MCF 10A (cell line): ENCODE measurements at regions of chr6 and their contacts with region 1.

Region 1: DNA sequence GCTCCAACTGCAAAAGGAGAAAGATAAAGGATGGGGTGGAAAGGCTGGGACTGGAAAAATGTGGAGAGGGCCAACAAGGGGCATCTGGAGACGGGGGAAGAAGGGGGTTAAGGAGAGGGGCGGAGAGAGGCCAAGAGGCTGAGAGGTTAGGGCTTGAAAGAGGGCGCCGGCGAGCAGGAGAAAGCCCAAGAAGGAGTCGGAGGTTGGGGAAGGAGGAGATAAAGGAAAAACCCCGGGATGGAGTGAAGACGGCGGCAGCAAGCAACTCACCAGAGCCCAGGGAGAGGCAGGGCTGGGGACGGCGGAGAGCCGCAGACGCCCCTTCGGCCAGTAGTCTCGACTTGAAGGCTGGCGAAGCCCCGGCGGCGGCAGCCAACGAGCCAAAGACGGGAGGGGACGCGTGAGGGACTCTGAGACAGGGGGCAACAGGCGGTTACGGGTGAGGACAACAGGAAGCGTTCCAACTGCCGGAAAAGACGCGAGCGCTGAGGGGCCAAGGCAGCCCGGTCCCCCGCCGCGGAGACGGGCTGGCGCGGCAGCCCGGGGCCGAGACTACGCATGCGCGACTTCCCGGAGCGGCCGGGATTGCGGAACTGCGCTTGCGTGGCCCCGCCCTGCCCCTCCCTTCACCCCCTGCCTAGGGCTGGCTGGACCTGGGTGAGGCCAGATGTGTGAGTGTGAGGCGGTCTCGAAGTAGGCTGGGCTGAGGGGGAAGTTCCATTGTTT is at the start of gene STK38:
- DNase-seq: peak; percentile 91
- H3K4me3 Mint-ChIP-seq: peak within 1 kb of the TSS; percentile 91
- H3K27ac Mint-ChIP-seq: peak within 1 kb of the TSS; percentile 93
- H3K4me1 Mint-ChIP-seq: peaks cover 12% of the 10 kb centered on the region
- H3K27me3 Mint-ChIP-seq: no peaks in the 10 kb centered on the region
- CTCF ChIP-seq: peak; percentile 20
- total RNA-seq, gene STK38: 16.8 and 20.0 TPM in 2 replicates

Region 2: DNA sequence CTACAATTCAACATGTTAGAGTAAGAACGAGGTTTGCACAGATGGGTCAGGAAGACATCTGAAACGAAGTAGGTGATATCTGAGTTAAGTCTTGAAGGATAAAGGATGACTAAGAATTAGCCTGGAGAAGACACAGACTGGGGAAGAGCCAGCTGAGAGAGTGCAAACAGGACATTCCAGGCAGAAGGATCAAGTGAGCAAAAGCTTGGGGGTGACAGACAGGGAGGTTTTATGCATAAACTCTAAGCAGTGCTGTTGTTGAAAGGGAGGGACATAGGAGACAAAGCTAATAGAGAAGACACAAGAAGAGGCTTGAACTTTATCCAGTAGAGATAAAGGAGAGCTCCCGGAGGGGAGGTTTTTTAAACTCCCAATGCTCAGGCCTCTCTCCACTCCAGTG is 144.6 kb before region 1 on chr6:
- CTCF ChIA-PET with region 1: no interaction called
- POLR2A ChIA-PET with region 1: no interaction called
- intact Hi-C with region 1: no loop called
- DNase-seq: no peak
- H3K4me3 Mint-ChIP-seq: no peak overlapping the region
- H3K27ac Mint-ChIP-seq: no peak overlapping the region
- H3K4me1 Mint-ChIP-seq: no peaks in the 10 kb centered on the region
- H3K27me3 Mint-ChIP-seq: peaks cover 11% of the 10 kb centered on the region
- CTCF ChIP-seq: no peak

Region 3: DNA sequence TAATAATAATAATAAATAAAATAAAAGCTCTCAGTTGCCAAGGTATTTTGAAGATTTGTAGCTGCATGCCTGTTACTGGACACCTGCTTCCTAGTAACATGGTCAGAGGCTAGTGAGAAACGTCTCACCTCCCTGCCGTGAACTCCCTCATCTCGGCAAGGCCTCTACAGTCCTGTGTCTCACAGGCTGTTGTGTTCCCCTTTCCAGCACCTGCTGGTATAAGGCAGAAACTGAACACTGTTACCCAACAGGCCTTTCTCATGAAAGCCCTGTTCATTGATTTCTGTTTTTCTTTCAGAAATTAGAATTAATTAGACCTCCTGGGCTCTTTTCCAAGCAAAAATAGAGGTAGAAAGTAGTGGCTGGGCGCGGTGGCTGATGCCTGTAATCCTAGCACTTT is 29.5 kb after region 1 on chr6:
- CTCF ChIA-PET with region 1: interaction called, 9 read pairs
- POLR2A ChIA-PET with region 1: interaction called, 59 read pairs
- intact Hi-C with region 1: loop called (anchors 1 kb)
- DNase-seq: no peak
- H3K4me3 Mint-ChIP-seq: no peak overlapping the region
- H3K27ac Mint-ChIP-seq: peak overlapping the region; percentile 81
- H3K4me1 Mint-ChIP-seq: peaks cover 20% of the 10 kb centered on the region
- H3K27me3 Mint-ChIP-seq: no peaks in the 10 kb centered on the region
- CTCF ChIP-seq: no peak

Region 4: DNA sequence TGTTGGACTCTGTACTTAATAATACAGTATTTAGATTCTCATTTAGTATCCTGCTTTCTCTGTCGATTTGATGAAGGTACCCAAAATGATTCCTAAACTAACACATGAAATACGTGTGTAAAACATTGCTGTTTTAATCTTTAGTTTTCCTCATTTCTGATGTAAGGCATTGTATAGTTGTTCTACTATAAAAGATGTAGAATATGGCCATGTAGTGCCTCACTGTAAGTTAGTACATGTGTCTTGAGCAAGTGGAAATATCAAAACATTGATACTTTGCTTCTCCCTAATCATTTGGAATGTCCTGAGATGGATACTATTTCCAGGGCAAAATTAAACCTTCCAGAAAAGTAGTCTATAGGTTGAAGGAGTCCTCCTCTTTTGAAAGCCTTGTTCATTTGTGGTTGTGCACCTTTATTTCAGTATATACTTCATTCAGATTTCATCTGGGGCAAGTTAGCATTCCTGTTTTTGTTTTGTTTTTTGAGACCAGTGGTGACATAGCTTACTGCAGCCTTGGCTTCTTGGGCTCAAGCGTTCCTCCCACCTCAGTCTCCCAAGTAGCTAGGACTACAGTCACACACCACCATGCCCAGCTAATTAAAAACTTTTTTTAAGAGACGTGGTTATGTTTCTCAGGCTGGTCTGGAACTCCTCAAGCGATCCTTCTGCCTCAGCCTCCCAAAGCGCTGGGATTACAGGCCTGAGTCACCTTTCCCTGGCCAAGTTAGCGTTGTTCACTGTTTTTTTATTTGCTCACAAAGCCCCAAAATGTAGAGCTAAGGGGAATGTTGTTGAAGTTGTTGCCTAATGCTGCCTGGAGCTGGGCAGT is 58.7 kb after region 1 on chr6:
- CTCF ChIA-PET with region 1: interaction called, 3 read pairs
- POLR2A ChIA-PET with region 1: interaction called, 16 read pairs
- intact Hi-C with region 1: no loop called
- DNase-seq: no peak
- H3K4me3 Mint-ChIP-seq: no peak overlapping the region
- H3K27ac Mint-ChIP-seq: no peak overlapping the region
- H3K4me1 Mint-ChIP-seq: peaks cover 32% of the 10 kb centered on the region
- H3K27me3 Mint-ChIP-seq: no peaks in the 10 kb centered on the region
- CTCF ChIP-seq: no peak

Region 5: DNA sequence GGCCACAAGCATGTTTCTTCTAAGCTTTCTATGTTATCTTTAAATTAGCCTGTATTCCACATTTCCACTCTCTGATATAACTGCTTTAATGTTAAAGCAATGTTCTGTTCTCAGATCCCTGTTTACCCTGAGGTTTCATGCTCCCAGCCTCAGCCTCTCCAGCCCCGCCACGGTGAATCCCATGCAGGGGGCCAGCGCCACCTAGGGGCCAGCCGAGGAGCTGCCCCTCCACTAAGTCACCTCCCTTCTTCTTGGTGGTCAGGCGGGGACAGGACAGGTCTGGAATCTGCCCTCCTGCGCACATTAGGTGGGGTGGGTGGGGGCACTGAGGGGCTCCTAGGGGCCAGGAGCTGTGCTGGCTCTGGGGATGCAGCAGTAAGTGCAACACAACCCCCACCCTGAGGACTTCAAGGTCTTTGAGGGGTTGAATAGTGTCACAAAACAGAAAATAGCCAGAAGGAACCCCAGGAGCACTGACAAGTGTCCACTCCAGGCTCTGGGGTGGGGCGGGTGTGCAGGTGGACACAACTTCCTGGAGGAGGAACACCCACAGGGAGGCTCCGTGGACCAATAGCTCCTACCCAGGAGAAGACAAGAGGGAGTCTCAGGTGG is 212.2 kb after region 1 on chr6:
- CTCF ChIA-PET with region 1: no interaction called
- POLR2A ChIA-PET with region 1: no interaction called
- intact Hi-C with region 1: no loop called
- DNase-seq: peak; percentile 70
- H3K4me3 Mint-ChIP-seq: no peak overlapping the region
- H3K27ac Mint-ChIP-seq: no peak overlapping the region
- H3K4me1 Mint-ChIP-seq: peaks cover 11% of the 10 kb centered on the region
- H3K27me3 Mint-ChIP-seq: no peaks in the 10 kb centered on the region
- CTCF ChIP-seq: peak; percentile 97